Left lung (tissue), 14 donors: ENCODE measurements at regions of chr14 and their contacts with region 1.

Region 1: DNA sequence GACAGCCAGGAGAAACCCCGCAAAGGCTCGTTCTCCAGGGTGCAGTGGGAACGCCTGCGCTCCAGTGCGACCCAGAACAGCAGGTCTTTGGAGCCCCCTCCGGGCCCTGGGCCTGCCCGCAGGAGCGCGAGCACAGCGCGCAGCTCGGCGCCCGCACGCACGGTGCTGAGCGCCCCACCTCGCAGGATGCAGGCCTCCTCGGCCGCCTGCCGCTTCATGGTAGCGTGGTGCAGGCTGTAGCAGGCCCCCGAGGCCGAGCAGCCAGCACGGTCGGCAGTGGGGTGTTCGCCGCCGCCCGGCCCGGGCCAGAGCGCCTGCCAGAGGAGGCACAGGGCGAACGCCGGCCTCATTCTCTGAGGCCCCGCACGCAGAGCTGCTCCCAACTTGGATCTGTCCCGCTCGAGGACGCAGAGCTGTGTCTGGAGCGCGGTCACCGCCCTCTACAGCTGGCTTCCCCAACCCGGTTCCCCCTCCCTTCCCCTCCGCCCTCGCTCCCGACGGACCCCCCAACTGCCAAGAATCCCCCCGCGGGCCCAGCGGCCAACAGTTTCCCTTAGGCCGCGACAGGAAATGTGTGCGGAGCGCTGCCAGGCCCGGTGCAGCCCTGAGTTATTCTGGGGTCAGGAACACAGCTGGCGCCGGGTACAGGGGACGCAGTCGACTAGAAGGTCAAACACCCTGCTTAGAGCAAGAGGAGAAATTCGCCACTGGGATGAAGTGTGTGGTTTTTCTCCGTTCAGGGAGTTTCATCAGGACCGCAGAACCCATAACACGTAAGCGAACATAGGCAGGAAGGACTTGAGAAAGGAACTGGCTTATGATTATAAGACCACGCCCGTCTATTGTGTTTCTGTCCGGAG is at the start of gene CLEC14A:
- DNase-seq: peak; percentile 36 to 83 (median 56)
- ATAC-seq: peak; percentile 67
- H3K4me3 ChIP-seq: peak within 1 kb of the TSS; percentile 23 to 42
- H3K27ac ChIP-seq: peak within 1 kb of the TSS; percentile 79 to 89
- H3K4me1 ChIP-seq: peaks cover 0 to 15% of the 10 kb centered on the region in 2 donors
- H3K27me3 ChIP-seq: peaks cover 25 to 46% of the 10 kb centered on the region in 2 donors
- CTCF ChIP-seq: no peak
- polyA plus RNA-seq, gene CLEC14A: 48.4 to 67.4 (median 58.5) TPM

Region 2: DNA sequence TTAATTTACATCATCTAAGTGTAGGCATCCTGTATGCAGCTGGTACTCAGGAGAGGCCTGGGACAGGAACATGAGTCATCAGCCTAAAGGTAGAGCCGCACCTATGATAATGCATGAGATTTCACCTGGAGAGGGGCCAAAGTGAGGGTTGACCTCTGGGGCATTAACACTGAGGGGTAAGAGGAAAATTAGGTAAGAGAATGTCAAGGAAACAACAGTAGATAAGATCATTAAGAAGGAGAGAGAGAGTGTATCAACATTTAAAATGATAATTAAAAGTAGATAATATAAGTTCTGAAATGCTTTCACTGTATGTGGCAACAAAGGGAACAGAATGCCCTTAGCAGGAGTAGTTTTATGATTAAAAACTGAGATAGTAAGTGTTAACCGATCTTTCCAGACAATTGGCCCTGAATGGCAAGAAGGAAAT is 68.3 kb before region 1 on chr14:
- intact Hi-C with region 1: no loop called
- DNase-seq: no peak
- ATAC-seq: no peak
- H3K4me3 ChIP-seq: no peak overlapping the region
- H3K27ac ChIP-seq: no peak overlapping the region
- H3K4me1 ChIP-seq: no peaks in the 10 kb centered on the region
- H3K27me3 ChIP-seq: no peaks in the 10 kb centered on the region
- CTCF ChIP-seq: no peak

Region 3: DNA sequence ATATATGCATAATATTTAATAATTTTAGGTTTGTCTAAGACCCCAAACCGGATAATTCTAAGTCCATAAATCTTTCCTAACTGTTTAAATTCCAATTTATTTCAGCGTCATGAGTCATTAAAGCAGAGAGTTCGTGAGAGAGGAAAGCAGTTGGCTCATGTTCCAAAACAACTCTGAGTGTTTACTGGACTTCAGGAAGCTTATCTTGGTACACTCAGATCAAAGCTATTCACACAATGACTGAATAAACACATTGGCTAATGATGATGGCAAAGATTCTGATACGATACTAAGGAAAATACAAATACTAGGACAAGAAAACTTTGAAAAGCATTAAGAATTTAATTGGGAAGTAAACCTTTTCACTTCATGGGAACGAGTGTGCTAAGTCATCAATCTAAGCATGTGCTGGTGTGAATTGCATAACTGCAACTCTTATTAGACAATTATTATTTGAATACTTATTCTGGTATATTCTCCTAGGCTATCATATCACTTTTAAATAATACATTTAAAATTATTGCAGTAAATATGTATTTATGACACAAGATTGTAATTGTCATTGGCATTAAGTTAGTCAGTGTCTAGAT is 34.8 kb after region 1 on chr14:
- intact Hi-C with region 1: loop called in 1 of 2 experiments (anchors 5 kb)
- DNase-seq: peak in 2 of 4 donors; percentile 63 to 64
- ATAC-seq: peak; percentile 95
- H3K4me3 ChIP-seq: no peak overlapping the region
- H3K27ac ChIP-seq: peak overlapping the region in 1 of 2 donors; percentile 65
- H3K4me1 ChIP-seq: peaks cover 10 to 17% of the 10 kb centered on the region in 2 donors
- H3K27me3 ChIP-seq: no peaks in the 10 kb centered on the region
- CTCF ChIP-seq: no peak